OCI-LY7 (cell line): ENCODE measurements at regions of chr16 and their contacts with region 1.

Region 1: DNA sequence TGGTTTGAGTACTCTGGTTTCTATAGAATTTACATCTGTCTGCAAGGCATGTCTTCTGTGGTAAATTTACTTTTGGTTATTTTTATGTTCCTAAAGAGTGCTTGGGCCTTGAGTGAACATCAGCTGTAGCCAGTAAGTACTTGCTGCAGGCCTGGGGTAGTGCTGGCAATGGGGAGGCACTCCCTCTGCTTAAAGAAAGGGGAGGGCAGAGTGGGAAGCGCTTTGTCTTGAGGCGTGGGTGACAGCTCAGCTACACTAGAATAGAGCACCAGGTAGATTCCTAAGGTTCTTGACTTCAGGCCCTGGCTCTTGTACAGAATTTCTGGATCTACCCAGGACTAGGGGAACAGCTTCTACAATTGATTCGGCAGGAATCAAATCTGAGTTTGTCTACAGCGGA is 50.6 kb downstream of the MPHOSPH6 start:
- DNase-seq: no peak
- H3K4me3 ChIP-seq: no peak overlapping the region
- H3K27ac ChIP-seq: no peak overlapping the region
- H3K4me1 ChIP-seq: no peaks in the 10 kb centered on the region
- CTCF ChIP-seq: no peak

Region 2: DNA sequence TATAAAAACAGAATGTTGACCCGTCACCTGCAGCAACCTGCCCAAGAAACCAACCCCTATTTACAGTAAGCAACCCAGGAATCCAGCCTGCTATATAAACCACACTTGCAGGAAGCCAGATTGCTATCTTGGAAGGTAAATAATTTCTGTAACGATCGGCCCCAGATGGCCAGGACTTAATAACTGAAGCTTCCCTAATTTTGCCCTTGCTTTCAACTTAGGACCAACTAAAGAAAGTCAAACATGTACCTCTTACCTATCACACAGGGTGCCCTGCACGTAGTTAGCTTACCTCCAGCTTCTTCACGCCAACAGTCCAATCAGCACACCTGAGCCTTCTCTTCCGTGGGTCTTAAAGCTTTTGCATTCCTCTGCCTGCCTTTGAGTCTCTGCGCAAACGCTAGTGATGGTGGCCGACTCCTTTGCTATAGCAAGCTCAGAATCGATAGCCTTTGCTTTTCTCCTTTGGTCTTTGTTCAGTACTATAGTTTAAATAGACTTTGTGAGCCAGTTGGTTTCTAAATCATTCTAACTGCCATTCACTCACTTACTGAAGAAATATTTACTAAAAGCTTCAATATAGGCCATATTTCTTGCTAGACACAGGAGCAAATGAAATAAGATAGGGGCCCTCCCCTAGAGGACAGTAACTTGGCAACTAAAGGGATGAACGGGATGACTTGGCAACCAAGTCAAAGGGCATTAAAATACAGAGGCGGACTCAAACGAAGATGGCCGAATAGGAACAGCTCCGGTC is 19.3 kb after region 1 on chr16:
- CTCF ChIA-PET with region 1: no interaction called
- POLR2A ChIA-PET with region 1: interaction called, 10 read pairs
- intact Hi-C with region 1: no loop called
- DNase-seq: no peak
- H3K4me3 ChIP-seq: no peak overlapping the region
- H3K27ac ChIP-seq: no peak overlapping the region
- H3K4me1 ChIP-seq: no peaks in the 10 kb centered on the region
- CTCF ChIP-seq: no peak